Calu3 (cell line): ENCODE measurements at regions of chr9 and their contacts with region 1.

Region 1: GRCh38 chr9:126781186-126782052 is 23.4 kb upstream of the ZBTB43 start:
- DNase-seq: peak; percentile 84
- H3K4me3 Mint-ChIP-seq: no peak overlapping the region
- H3K27ac Mint-ChIP-seq: no peak overlapping the region
- H3K4me1 Mint-ChIP-seq: no peaks in the 10 kb centered on the region
- H3K27me3 Mint-ChIP-seq: peaks cover 59% of the 10 kb centered on the region
- CTCF ChIP-seq: peak; percentile 81

Region 2: DNA sequence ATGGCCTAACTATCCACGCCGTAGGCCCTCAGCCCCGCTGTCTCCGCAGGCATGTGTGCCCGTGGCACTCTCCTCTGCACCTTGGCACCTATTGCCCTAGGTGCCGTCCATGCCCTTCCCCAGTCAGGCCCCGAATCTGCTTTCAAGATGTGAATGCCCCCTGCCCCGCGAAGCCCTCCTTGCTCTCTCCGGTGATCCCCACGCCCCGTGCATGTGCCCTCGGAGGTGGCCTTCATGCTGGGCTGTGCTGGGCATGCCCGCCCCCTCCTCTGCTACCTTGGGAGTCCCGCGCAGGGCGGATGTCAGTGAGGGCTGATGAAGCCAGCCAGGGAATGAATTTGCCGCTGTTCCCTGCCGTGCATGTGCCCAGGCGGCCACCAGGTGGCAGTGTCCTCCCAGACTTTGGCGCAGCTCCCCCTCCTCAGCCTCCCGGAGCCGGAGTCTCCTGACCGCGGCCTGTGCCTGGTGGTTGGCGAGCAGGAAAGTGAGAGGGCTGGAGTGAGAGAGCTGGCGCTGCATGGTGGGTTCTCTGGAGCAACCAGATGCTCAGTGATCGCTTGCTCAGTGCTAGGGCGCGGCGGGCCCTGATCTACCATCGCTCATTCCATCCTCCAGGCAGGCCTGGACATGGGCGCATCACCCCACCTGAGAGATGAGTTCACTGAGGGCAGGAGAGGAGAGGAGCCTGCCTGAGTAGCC is 280.6 kb before region 1 on chr9:
- CTCF ChIA-PET with region 1: interaction called, 4 read pairs
- intact Hi-C with region 1: loop called (anchors 5 kb)
- DNase-seq: peak; percentile 75
- H3K4me3 Mint-ChIP-seq: no peak overlapping the region
- H3K27ac Mint-ChIP-seq: no peak overlapping the region
- H3K4me1 Mint-ChIP-seq: no peaks in the 10 kb centered on the region
- H3K27me3 Mint-ChIP-seq: peaks cover 12% of the 10 kb centered on the region
- CTCF ChIP-seq: peak; percentile 71

Region 3: GRCh38 chr9:126611592-126612325 is 169.7 kb before region 1 on chr9:
- CTCF ChIA-PET with region 1: no interaction called
- intact Hi-C with region 1: loop called (anchors 2 kb)
- DNase-seq: peak; percentile 81
- H3K4me3 Mint-ChIP-seq: no peak overlapping the region
- H3K27ac Mint-ChIP-seq: no peak overlapping the region
- H3K4me1 Mint-ChIP-seq: peaks cover 8% of the 10 kb centered on the region
- H3K27me3 Mint-ChIP-seq: peaks cover 52% of the 10 kb centered on the region
- CTCF ChIP-seq: peak; percentile 73

Region 4: DNA sequence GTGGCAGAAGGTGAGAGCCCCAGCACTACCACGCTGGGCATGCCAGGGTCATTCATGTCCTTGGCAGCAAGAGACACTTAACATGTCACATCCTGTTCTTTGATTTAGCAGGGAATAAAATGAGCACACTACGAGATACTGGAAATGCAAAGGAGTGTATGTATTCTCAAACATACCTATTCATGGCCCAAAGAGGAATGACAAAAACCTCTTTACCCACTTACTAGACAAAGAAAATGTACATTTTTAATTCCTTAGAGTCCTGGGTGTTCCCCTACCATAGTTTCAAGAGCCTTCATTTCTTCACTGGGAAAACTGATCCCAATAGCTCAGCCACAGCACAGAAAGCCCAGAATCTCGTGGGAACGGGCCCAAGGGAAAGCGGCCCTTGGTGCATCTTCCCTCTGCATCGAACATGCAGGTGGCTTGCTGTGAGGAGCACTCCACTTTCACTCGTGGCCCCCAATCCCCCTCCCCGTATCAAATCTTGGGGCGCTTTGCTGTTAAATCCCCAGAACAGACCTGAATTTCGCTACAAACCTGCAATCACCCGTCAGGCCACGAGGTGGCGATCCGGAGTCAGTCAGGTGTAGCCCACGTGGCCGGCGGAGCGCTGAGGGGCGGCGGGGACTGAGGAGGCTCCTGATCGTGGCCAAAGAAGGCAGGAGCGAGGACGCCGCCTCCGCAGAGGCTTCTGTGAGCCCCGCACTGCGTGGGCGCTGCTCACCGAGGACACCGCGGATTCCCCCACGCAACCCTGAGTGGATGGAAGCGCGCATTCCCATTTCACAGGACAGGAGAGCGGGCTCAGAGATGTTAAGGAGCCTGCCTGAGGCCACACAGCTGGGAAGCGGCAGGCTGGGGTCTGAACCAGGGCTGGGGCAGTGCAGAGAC is 76.3 kb before region 1 on chr9:
- CTCF ChIA-PET with region 1: interaction called, 91 read pairs
- intact Hi-C with region 1: loop called (anchors 2 kb)
- DNase-seq: peak; percentile 77
- H3K4me3 Mint-ChIP-seq: peak overlapping the region; percentile 22
- H3K27ac Mint-ChIP-seq: no peak overlapping the region
- H3K4me1 Mint-ChIP-seq: no peaks in the 10 kb centered on the region
- H3K27me3 Mint-ChIP-seq: peaks cover 81% of the 10 kb centered on the region
- CTCF ChIP-seq: peak; percentile 56

Region 5: DNA sequence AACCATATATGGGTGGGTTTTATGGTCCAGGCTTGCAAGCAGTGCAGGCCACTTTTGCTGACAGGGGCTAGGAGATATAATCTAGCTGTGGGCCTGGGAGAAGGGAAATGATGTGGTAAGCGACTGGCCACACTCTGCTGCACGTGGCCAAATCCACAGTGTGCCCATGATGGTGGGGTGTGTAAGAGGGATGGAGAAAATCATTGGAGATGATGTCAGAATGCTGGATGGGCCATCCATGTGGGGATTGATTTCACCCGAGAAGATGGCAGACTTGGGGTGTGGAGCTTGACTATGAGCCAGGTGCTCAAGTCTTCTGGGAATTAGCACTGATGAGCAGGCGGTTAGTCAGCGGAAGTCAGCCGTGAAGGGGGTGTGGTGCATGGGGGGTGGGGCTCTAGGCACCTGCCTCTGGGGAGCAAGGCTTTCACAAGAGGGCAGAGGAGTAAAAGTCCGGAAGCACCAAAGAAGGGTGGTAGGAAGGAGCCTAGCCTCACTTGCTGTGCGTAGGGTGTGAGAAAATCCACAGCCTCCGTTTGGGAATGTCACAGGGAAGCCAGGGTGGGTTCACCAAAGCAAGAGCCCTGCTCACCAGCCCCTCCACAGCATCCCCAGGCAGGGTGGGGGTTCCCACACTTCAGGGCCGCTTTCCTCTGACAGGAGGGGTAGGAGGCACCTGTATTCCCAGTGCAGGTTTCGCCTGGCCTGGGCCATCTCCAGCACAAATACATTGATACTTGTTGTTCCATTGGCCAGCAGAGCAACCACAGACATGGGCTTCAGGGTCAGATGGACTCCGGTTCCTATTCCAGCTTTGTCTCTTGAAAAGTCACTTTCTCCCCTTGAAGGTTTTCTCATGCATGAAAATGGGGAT is 385.5 kb after region 1 on chr9:
- CTCF ChIA-PET with region 1: no interaction called
- intact Hi-C with region 1: no loop called
- DNase-seq: no peak
- H3K4me3 Mint-ChIP-seq: no peak overlapping the region
- H3K27ac Mint-ChIP-seq: no peak overlapping the region
- H3K4me1 Mint-ChIP-seq: no peaks in the 10 kb centered on the region
- H3K27me3 Mint-ChIP-seq: no peaks in the 10 kb centered on the region
- CTCF ChIP-seq: no peak